Body of pancreas (tissue), 4 donors: ENCODE measurements at regions of chr17 and their contacts with region 1.

Region 1: GRCh38 chr17:48011405-48012150 is 26.0 kb downstream of the COPZ2 start:
- DNase-seq: peak in 2 of 4 donors; percentile 29 to 33
- ATAC-seq: no peak
- H3K4me3 ChIP-seq: no peak overlapping the region
- H3K27ac ChIP-seq: no peak overlapping the region
- H3K4me1 ChIP-seq: peaks cover 8% of the 10 kb centered on the region
- H3K27me3 ChIP-seq: no peaks in the 10 kb centered on the region
- CTCF ChIP-seq: peak in 3 of 7 experiments; percentile 33 to 44 (median 38)
- POLR2A ChIP-seq: no peak

Region 2: DNA sequence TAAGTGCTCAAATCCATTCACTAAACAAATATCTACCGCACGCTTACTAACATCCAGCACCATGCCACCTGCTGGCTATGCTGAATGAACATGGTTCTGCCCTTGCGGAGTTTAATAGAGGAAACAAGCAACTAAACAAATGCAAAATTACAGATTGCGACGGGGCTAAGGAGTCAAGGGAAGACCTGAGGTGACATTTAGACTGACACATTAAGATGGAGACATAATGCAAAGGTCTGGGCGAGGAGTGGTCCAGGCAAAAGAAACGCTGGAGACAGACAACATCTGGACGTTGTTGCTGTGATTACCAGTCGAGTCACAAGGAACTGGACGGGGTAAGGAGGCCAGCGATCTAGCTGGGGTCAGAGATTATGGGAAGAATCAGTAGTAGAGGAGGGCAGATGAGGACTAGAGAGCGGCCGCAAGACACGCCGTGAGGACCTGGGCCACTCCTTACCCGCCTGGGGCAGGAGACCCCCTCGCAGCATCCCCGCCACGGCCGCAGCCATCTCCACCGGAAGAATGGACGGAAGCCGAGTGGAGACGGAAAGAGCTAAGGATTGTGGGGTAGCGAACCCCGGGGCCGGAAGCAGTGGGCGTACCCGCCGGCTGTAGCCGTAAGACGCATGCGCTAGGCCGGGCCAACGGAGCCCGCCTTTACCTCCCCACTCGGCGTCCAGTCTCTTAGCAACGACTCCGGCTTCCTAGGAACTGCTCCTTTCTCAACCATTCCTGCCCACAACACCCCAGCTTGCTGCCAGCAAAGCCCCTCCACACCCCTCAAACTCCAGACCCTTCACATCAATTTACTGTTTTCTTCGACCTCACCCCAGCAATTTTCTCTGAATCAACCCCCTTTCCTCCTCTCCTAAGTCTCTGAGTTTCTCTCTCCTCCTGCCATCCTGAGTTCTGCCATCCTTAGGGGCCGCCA is 180.3 kb before region 1 on chr17 and contains the starts of genes LRRC46 and MRPL10:
- intact Hi-C with region 1: loop called (anchors 10 kb)
- DNase-seq: peak; percentile 93 to 95 (median 94)
- ATAC-seq: peak; percentile 99
- H3K4me3 ChIP-seq: peak within 1 kb of the TSS; percentile 58 to 67
- H3K27ac ChIP-seq: peak within 1 kb of the TSS; percentile 23 to 78 (median 61)
- H3K4me1 ChIP-seq: peaks cover 20% of the 10 kb centered on the region
- H3K27me3 ChIP-seq: no peaks in the 10 kb centered on the region
- CTCF ChIP-seq: peak in 2 of 7 experiments; percentile 14 to 19
- POLR2A ChIP-seq: peak; percentile 42 to 87 (median 82)
- total RNA-seq, gene LRRC46: not detected
- total RNA-seq, gene MRPL10: 4.3 to 29.8 TPM

Region 3: GRCh38 chr17:47981462-47981861 is 30.1 kb before region 1 on chr17:
- intact Hi-C with region 1: loop called (anchors 5 kb)
- DNase-seq: no peak
- ATAC-seq: no peak
- H3K4me3 ChIP-seq: no peak overlapping the region
- H3K27ac ChIP-seq: no peak overlapping the region
- H3K4me1 ChIP-seq: no peaks in the 10 kb centered on the region
- H3K27me3 ChIP-seq: no peaks in the 10 kb centered on the region
- CTCF ChIP-seq: no peak
- POLR2A ChIP-seq: no peak